ENCODE measurements at regions of chr9 and their contacts with region 1.

Region 1: GRCh38 chr9:90914868-90915483 is 113.4 kb downstream of the SYK start:
- DNase-seq: peak; percentile 65 to 83 (median 76)
- H3K4me3 ChIP-seq: no peak overlapping the region
- H3K27ac ChIP-seq: no peak overlapping the region
- H3K4me1 ChIP-seq: no peaks in the 10 kb centered on the region
- H3K27me3 ChIP-seq: no peaks in the 10 kb centered on the region
- CTCF ChIP-seq: peak; percentile 80 to 98 (median 96)
- POLR2A ChIP-seq: no peak

Region 2: DNA sequence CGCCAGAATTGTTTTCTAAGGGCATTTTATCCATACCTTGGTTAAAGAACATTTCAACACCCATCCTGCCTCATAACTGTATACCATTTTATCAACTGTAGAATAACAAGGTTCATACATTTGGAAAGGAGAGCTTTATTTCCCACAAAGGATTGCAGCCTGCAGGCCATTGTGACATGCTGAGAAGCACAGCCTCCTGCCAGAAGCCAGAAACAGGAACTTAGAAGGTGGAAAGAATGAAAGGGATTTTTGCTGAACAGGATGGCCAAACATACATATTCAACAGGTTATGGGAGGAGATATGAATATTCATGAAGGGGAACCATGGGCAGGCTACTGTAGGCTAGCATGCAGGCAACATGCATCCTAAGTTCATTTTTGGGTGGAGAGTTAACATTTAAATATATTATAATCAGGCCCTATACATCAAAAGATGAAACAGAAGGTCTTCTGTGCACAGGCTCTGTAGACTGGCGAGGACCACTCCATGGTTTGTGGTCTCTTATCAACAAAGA is 212.5 kb before region 1 on chr9:
- intact Hi-C with region 1: no loop called
- DNase-seq: peak in 1 of 7 donors; percentile 1
- H3K4me3 ChIP-seq: no peak overlapping the region
- H3K27ac ChIP-seq: no peak overlapping the region
- H3K4me1 ChIP-seq: no peaks in the 10 kb centered on the region
- H3K27me3 ChIP-seq: no peaks in the 10 kb centered on the region
- CTCF ChIP-seq: no peak
- POLR2A ChIP-seq: no peak

Region 3: DNA sequence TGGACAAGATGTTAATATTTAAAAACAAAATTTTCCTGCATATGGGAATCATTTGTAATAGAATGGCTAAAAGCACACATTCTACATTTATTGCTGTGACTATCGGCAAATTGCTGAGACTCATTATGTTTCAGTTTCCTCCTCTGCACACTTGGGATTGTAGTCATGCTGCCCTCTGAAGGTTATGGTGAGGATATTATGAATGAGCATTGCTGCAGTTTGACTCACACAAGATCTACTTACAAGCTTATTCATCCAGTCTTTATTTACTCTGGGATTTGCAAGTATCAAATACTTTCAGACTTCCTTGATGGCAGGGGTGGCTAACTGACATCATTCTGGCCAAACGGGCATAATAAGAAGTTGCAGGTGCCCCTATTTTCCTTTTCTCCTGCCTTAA is 518.2 kb after region 1 on chr9:
- intact Hi-C with region 1: loop called (anchors 5 to 10 kb)
- DNase-seq: peak in 3 of 7 donors; percentile 43 to 48 (median 47)
- H3K4me3 ChIP-seq: no peak overlapping the region
- H3K27ac ChIP-seq: no peak overlapping the region
- H3K4me1 ChIP-seq: no peaks in the 10 kb centered on the region
- H3K27me3 ChIP-seq: no peaks in the 10 kb centered on the region
- CTCF ChIP-seq: peak in 5 of 6 experiments; percentile 53 to 63 (median 60)
- POLR2A ChIP-seq: no peak

Region 4: GRCh38 chr9:91681461-91682305 is 766.7 kb after region 1 on chr9:
- intact Hi-C with region 1: loop called in 1 of 2 experiments (anchors 5 kb)
- DNase-seq: peak; percentile 68 to 85 (median 80)
- H3K4me3 ChIP-seq: peak overlapping the region in 1 of 4 donors; percentile 1
- H3K27ac ChIP-seq: no peak overlapping the region
- H3K4me1 ChIP-seq: peaks cover 0 to 5% of the 10 kb centered on the region in 2 donors
- H3K27me3 ChIP-seq: no peaks in the 10 kb centered on the region
- CTCF ChIP-seq: peak; percentile 62 to 92 (median 74)
- POLR2A ChIP-seq: no peak

Region 5: DNA sequence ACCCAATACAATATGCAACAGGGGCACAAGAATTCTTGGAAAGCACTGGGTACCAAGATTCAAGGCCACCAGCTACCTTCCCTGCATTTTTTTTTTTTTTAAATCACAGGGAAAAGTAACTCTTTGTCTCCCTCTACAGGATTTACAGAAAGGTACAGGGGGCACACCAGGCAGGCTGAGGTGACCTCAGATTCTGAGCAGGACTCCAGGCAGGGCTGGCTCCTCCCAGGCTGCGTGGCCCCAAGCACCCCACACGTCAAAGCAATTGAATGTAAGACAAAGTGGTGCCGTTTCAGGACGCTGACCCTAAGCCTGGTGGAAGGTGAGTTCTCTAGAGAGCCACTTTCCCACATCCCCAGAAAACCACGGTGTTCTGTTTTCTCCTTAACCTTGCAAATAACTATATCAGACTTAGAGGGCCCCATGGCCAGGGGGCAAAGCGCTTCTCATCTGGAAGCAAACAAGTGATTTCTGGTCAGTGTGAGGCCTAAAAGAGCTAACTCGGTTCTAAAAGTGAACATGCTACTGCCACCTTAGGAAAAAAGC is 812.4 kb after region 1 on chr9:
- intact Hi-C with region 1: loop called (anchors 5 to 10 kb)
- DNase-seq: peak in 5 of 7 donors; percentile 38 to 64 (median 48)
- H3K4me3 ChIP-seq: no peak overlapping the region
- H3K27ac ChIP-seq: no peak overlapping the region
- H3K4me1 ChIP-seq: no peaks in the 10 kb centered on the region
- H3K27me3 ChIP-seq: no peaks in the 10 kb centered on the region
- CTCF ChIP-seq: peak; percentile 53 to 70 (median 64)
- POLR2A ChIP-seq: no peak

Region 6: DNA sequence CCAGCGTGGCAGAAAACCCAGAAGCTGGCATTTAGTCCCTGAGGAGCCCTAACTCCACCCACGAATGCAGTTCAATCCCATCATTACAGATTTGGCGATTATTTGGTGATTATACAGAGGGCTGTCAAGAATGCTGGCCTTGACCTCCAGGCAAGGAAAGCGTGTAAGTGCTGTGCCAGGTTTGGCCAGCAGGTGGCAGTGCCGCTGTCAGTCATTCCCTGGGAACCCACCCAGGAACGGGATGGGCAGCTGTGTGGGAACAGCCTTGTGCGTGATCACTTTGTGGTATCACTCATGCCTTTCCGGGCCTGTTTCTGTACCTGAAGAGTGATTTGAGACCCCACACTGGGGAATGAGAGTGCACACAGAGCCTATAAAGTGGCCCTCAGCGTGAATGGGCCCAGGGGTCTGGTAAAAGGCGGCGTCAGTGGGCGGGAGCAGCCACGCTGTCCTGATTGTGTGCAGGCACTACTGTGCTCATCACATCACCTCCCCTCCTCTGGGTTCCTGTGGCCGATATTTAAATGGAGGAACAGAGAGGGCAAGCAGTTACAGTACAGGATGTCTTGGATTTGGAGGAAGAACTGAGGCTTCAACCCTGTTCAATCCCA is 819.5 kb after region 1 on chr9:
- intact Hi-C with region 1: loop called (anchors 5 to 10 kb)
- DNase-seq: peak; percentile 52 to 88 (median 75)
- H3K4me3 ChIP-seq: no peak overlapping the region
- H3K27ac ChIP-seq: no peak overlapping the region
- H3K4me1 ChIP-seq: peaks cover 0 to 5% of the 10 kb centered on the region in 2 donors
- H3K27me3 ChIP-seq: no peaks in the 10 kb centered on the region
- CTCF ChIP-seq: peak; percentile 70 to 92 (median 82)
- POLR2A ChIP-seq: no peak

Measured in adrenal gland (tissue), 19 donors.